Naive thymus-derived CD4-positive, alpha-beta T cell (primary cell): ENCODE measurements at regions of chr5 and their contacts with region 1.

Region 1: DNA sequence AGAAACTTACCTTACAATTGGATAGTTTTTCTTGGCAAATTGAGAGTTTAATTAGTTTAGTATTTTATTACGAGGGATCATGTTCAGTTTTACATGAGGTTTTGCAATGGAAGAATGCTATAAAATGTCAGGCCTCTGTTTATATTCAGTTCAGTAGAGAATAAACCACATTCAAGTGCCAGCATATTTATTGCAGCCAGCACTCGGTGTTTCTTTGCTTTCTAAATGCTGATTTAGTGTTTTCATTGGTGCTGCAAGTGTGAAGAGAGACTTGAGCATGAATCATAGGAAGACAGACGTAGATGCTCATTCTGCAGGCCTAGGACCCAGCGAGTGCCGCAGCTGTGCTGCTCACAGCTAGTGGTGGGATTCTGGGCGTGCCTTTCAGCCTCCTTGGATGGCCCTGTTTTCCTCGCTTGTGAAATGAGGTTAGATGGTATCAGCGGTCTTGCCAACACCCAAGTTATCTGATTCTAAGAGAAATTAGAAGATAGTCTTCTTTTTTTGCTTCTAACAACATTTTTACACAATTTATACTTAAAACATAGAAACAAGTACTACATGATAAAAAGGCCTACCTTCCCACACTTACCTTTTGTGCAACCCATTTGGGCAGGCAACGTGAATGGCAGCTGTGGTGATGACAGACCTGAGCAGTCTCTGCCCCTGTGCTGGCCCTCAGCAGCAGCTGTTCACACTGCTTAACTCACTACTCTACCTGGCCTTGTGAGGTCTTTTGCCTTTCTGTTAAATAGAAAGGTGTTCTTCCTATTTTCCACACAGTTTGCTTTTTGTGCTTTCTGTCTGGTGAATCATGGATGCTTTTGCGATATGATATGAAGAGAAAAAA is 26.8 kb upstream of the TNFAIP8 start:
- DNase-seq: peak in 4 of 9 donors; percentile 30 to 71 (median 37)
- ATAC-seq: peak; percentile 59
- H3K4me3 ChIP-seq: peak overlapping the region; percentile 40
- H3K4me3 Mint-ChIP-seq: peak overlapping the region; percentile 73 to 97 (median 81)
- H3K27ac ChIP-seq: peak overlapping the region; percentile 78
- H3K27ac Mint-ChIP-seq: peak overlapping the region; percentile 84 to 99 (median 95)
- H3K4me1 ChIP-seq: peaks cover 72 to 86% of the 10 kb centered on the region in 2 donors
- H3K4me1 Mint-ChIP-seq: peaks cover 63 to 98% (median 90%) of the 10 kb centered on the region in 7 donors
- H3K27me3 ChIP-seq: no peaks in the 10 kb centered on the region
- H3K27me3 Mint-ChIP-seq: no peaks in the 10 kb centered on the region

Region 2: DNA sequence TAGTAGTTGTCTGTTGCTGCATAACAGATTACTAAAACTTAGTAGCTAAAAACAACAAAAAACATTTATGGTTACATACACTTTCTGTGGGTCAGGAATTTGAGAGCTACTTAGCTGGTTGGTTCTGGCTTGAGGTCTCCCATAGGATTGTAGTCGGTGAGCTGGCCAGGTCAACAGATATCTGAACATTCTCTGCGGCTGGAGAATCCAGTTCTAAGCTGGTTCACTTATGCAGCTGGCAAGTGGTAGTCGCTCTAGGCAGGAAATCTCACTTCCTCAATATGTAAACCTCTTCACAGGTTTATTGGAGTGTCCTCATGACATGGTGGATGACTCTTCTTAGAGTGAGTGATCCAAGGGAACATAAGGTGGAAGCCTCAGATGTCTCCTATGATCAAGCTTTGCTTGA is 38.8 kb before region 1 on chr5:
- CTCF ChIA-PET with region 1: interaction called, 3 read pairs
- POLR2A ChIA-PET with region 1: interaction called, 7 read pairs
- intact Hi-C with region 1: loop called (anchors 1 to 5 kb)
- DNase-seq: peak in 1 of 9 donors; percentile 39
- ATAC-seq: peak; percentile 62
- H3K4me3 ChIP-seq: peak overlapping the region; percentile 47
- H3K4me3 Mint-ChIP-seq: peak overlapping the region; percentile 63 to 97 (median 82)
- H3K27ac ChIP-seq: peak overlapping the region; percentile 82
- H3K27ac Mint-ChIP-seq: peak overlapping the region; percentile 87 to 100 (median 96)
- H3K4me1 ChIP-seq: peaks cover 65% of the 10 kb centered on the region in 2 donors
- H3K4me1 Mint-ChIP-seq: peaks cover 67 to 95% (median 84%) of the 10 kb centered on the region in 7 donors
- H3K27me3 ChIP-seq: no peaks in the 10 kb centered on the region
- H3K27me3 Mint-ChIP-seq: no peaks in the 10 kb centered on the region

Region 3: DNA sequence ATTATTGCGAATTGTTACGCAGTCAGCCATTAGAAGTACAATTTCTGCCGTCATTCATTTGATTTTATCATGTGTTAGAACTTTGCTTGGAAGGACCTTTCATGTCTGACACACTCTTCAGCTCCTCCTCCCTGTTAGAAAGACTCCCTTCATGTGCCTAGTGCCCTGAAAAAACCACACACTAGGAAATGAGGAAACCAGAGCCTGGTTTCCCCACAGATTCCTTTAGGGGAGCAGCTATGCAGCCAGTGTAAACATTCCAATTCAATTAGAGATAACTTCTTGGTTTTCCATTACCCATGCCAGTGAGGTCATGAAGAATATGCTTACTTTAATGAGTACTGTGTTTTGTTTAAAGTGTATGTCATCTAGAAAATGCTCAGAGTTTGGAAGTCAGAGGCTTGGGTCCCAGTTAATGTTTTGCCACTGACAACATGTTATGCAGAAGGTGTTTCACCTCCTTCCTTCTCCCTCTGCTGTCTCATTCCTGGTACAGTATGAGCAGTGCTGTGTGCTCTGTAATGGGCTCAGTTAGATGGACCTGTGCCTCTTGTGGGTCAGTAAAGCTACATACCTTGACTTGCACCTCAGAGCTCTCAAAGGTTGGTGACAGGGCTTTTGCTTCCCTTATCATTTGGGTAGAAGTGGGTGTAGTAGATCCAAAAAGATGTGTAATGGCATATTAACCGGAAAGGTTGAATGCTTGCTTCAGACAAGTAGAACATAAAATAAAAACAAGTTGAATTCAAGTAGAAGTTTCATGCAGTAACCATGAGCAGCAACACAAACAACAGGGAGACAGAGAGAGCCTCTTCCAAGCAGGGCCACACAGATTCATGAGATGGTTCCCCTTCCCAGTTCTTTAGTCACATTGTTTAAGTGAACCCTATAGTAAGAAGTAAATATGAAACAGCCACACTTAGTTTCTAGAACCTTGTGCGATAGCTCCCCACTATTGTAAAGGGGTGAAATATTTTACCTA is 25.8 kb before region 1 on chr5:
- CTCF ChIA-PET with region 1: no interaction called
- POLR2A ChIA-PET with region 1: interaction called, 32 read pairs
- intact Hi-C with region 1: no loop called
- DNase-seq: peak in 3 of 9 donors; percentile 36 to 66 (median 51)
- ATAC-seq: peak; percentile 78
- H3K4me3 ChIP-seq: peak overlapping the region; percentile 24
- H3K4me3 Mint-ChIP-seq: peak overlapping the region; percentile 63 to 93 (median 76)
- H3K27ac ChIP-seq: peak overlapping the region; percentile 74
- H3K27ac Mint-ChIP-seq: peak overlapping the region; percentile 85 to 100 (median 98)
- H3K4me1 ChIP-seq: peaks cover 81 to 82% of the 10 kb centered on the region in 2 donors
- H3K4me1 Mint-ChIP-seq: peaks cover 57 to 97% (median 94%) of the 10 kb centered on the region in 7 donors
- H3K27me3 ChIP-seq: no peaks in the 10 kb centered on the region
- H3K27me3 Mint-ChIP-seq: no peaks in the 10 kb centered on the region

Region 4: DNA sequence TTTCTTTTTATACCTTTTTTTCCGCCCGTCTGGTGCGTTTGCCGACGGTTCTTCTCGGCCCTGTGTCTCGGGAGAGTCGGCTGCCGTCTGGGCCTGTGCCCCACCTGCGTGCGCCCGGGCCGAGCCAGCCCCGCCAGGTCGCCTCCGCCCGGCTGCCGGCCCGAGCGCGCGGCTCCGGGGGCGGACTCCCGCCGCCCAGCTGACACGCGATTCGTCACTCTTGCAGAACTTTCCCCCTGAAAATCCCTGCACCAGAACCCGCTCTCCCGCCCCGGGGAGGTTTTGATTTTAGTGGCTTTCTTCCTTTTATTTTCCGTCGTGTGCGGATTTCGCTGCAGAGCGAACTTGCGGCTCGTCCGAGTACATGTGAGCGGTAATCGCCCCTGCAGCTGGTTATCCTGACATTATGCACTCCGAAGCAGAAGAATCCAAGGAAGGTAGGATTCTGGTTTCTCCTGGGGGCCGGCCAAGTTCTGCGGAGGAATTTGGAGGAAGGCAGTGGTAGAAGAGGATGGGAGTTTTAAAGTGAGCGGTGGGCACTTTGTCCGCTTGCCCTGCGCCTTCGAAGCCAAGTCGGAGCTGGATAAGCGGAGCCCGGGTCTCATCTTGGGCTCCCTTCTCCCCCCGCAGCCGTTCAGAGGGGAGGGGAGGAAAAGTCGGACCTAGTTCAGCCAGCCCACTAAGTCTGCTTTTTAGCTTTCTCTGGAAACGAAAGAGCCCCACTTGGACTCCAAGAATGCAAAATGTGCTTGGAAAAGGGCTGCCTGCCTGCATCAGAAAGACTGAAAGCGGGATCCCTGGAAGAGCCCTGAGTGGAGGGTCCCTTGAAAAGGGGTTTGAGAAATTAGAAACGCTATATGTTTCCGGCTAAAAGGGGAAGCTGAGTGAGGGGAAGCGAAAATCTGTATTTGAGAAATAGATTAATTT is 27.0 kb after region 1 on chr5 and contains the start of gene TNFAIP8:
- CTCF ChIA-PET with region 1: interaction called, 4 read pairs
- POLR2A ChIA-PET with region 1: interaction called, 8 read pairs
- intact Hi-C with region 1: loop called in 1 of 2 experiments (anchors 1 kb)
- DNase-seq: peak in 2 of 9 donors; percentile 69 to 85
- ATAC-seq: peak; percentile 61
- H3K4me3 ChIP-seq: peak within 1 kb of the TSS; percentile 53
- H3K4me3 Mint-ChIP-seq: peak within 1 kb of the TSS; percentile 81 to 98 (median 90)
- H3K27ac ChIP-seq: peak within 1 kb of the TSS; percentile 55
- H3K27ac Mint-ChIP-seq: peak within 1 kb of the TSS; percentile 86 to 97 (median 91)
- H3K4me1 ChIP-seq: peaks cover 78 to 88% of the 10 kb centered on the region in 2 donors
- H3K4me1 Mint-ChIP-seq: peaks cover 66 to 100% (median 97%) of the 10 kb centered on the region in 7 donors
- H3K27me3 ChIP-seq: no peaks in the 10 kb centered on the region
- H3K27me3 Mint-ChIP-seq: no peaks in the 10 kb centered on the region
- total RNA-seq, gene TNFAIP8: 102 to 162 (median 130) TPM

Region 5: GRCh38 chr5:119367502-119368237 is 38.7 kb after region 1 on chr5:
- CTCF ChIA-PET with region 1: no interaction called
- POLR2A ChIA-PET with region 1: no interaction called
- intact Hi-C with region 1: loop called in 1 of 2 experiments (anchors 5 kb)
- DNase-seq: peak in 2 of 9 donors; percentile 20 to 46
- ATAC-seq: peak; percentile 74
- H3K4me3 ChIP-seq: no peak overlapping the region
- H3K4me3 Mint-ChIP-seq: peak overlapping the region; percentile 52 to 78 (median 73)
- H3K27ac ChIP-seq: peak overlapping the region; percentile 55
- H3K27ac Mint-ChIP-seq: peak overlapping the region; percentile 24 to 96 (median 84)
- H3K4me1 ChIP-seq: peaks cover 54 to 76% of the 10 kb centered on the region in 2 donors
- H3K4me1 Mint-ChIP-seq: peaks cover 49 to 89% (median 84%) of the 10 kb centered on the region in 7 donors
- H3K27me3 ChIP-seq: no peaks in the 10 kb centered on the region
- H3K27me3 Mint-ChIP-seq: no peaks in the 10 kb centered on the region

Region 6: DNA sequence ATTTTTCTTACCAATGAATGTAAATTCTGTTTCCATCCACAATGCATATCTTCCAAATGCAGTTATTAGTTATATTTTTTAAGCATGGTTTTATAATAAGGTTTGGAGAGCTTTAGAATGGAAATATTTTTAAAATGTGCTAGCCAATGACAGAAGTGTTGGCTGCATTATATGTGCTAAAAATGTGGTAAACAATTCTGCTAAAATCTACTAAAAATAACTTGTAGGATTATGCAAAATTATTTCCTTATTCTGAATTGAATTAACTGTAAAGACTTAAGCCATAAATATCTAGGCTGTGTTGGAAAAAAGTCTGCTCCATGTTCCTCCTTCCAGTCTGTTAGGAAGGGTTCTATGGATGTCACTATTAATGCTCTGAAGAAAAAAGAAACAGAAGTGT is 1638.4 kb after region 1 on chr5:
- CTCF ChIA-PET with region 1: no interaction called
- POLR2A ChIA-PET with region 1: no interaction called
- intact Hi-C with region 1: no loop called
- DNase-seq: no peak
- ATAC-seq: no peak
- H3K4me3 ChIP-seq: no peak overlapping the region
- H3K4me3 Mint-ChIP-seq: no peak overlapping the region
- H3K27ac ChIP-seq: no peak overlapping the region
- H3K27ac Mint-ChIP-seq: no peak overlapping the region
- H3K4me1 ChIP-seq: no peaks in the 10 kb centered on the region
- H3K4me1 Mint-ChIP-seq: no peaks in the 10 kb centered on the region
- H3K27me3 ChIP-seq: no peaks in the 10 kb centered on the region
- H3K27me3 Mint-ChIP-seq: no peaks in the 10 kb centered on the region